Head of caudate nucleus (tissue), 42 donors: ENCODE measurements at regions of chr11 and their contacts with region 1.

Region 1: GRCh38 chr11:129117595-129118350 is 74.4 kb downstream of the ARHGAP32 start:
- DNase-seq: peak in 36 of 42 donors; percentile 7 to 81 (median 52)

Region 2: DNA sequence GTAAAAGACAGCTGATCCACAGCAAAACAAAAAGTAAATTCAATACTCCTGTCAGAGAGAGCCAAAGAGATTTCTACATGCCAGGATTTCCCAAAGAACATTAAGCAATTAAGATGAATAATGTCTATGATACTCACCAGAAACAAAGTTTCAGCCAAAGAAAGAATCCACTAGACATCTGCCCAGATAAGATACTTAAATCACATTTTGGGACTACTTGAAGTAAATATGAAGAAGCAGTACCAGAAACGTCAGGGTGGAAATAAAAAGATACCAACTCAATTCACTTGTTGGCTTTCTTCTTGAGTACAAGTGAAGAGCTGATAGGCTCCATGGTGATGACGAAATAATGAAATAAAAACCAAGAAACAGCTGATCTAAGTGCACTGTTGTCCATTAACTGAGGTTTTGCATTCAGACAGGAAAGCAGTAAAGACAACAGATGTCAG is 106.0 kb after region 1 on chr11:
- intact Hi-C with region 1: loop called (anchors 10 kb)
- DNase-seq: no peak

Region 3: DNA sequence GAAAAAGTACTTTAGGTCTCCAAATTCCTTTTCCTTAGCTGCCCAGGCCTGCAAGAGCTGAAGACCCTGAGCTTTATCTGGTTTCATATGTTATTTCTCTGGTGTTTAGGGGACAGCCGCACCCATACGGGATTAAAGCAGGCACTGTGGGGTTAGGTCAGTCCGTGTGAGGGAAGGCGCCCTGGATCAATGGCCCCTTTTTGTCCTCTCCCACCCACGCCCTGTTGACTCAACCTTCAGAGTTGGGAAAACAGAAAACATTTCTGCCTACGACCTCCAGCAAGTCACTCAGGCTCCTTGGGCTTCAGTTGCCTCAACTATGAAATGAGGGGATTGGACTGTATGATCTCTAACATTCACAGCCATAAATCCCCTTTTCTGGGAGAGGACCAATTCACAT is 202.7 kb after region 1 on chr11:
- intact Hi-C with region 1: no loop called
- DNase-seq: peak in 1 of 42 donors; percentile 30

Region 4: GRCh38 chr11:129331871-129332274 is 214.1 kb after region 1 on chr11:
- intact Hi-C with region 1: loop called (anchors 5 kb)
- DNase-seq: peak; percentile 78 to 95 (median 89)